ENCODE measurements at regions of chr18 and their contacts with region 1.

Region 1: DNA sequence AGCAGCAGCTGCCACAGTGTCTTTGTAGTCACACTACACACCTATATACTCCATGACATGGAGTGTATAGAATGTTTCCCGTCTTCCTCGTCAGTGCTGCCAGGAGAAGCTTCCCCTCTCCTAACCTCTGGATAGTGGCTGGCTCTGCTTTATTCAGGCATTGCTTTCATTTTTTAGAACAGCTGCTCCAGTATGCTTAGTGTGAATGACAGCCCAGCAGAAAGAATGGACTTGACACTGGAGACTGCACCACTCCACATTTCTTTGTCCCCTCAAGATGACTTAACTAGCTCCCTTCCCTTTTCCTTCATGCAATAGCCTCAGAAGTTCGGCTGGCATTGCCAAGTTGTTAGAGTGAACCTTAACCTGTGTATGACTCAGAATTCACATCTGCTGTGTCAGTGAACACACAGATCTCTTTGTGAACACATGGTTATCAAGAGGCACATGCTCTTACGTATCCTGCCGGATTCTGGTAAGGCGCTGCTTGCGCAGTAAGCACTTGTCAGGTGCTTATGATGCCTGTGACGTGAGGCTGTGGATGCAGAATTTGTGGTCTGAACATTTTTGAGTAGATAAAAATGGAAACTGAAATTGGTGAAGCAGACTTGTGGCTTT is 73.9 kb downstream of the NEDD4L start:
- DNase-seq: peak; percentile 63
- H3K4me3 ChIP-seq: no peak overlapping the region
- H3K27ac ChIP-seq: peak overlapping the region; percentile 62 to 73 (median 70)
- H3K4me1 ChIP-seq: peaks cover 7 to 19% (median 13%) of the 10 kb centered on the region in 4 donors
- H3K27me3 ChIP-seq: no peaks in the 10 kb centered on the region
- CTCF ChIP-seq: no peak
- EP300 ChIP-seq: no peak
- POLR2A ChIP-seq: no peak

Region 2: GRCh38 chr18:57569133-57569532 is 548.8 kb before region 1 on chr18:
- in situ Hi-C with region 1: no loop called
- intact Hi-C with region 1: no loop called
- DNase-seq: no peak
- H3K4me3 ChIP-seq: no peak overlapping the region
- H3K27ac ChIP-seq: no peak overlapping the region
- H3K4me1 ChIP-seq: no peaks in the 10 kb centered on the region
- H3K27me3 ChIP-seq: no peaks in the 10 kb centered on the region
- CTCF ChIP-seq: no peak
- EP300 ChIP-seq: no peak
- POLR2A ChIP-seq: no peak

Region 3: GRCh38 chr18:57881818-57882413 is 236.0 kb before region 1 on chr18:
- in situ Hi-C with region 1: loop called (anchors 10 to 25 kb)
- intact Hi-C with region 1: loop called (anchors 10 kb)
- DNase-seq: peak; percentile 74
- H3K4me3 ChIP-seq: no peak overlapping the region
- H3K27ac ChIP-seq: no peak overlapping the region
- H3K4me1 ChIP-seq: peaks cover 0 to 3% (median 0%) of the 10 kb centered on the region in 4 donors
- H3K27me3 ChIP-seq: no peaks in the 10 kb centered on the region
- CTCF ChIP-seq: peak; percentile 85 to 91 (median 90)
- EP300 ChIP-seq: no peak
- POLR2A ChIP-seq: no peak

Region 4: GRCh38 chr18:57959278-57959677 is 158.6 kb before region 1 on chr18:
- in situ Hi-C with region 1: loop called in 1 of 4 experiments (anchors 25 kb)
- intact Hi-C with region 1: no loop called
- DNase-seq: peak; percentile 53
- H3K4me3 ChIP-seq: no peak overlapping the region
- H3K27ac ChIP-seq: no peak overlapping the region
- H3K4me1 ChIP-seq: peaks cover 0 to 16% (median 8%) of the 10 kb centered on the region in 4 donors
- H3K27me3 ChIP-seq: no peaks in the 10 kb centered on the region
- CTCF ChIP-seq: peak; percentile 24 to 45 (median 33)
- EP300 ChIP-seq: no peak
- POLR2A ChIP-seq: no peak

Region 5: GRCh38 chr18:58051765-58052460 is 66.0 kb before region 1 on chr18:
- in situ Hi-C with region 1: loop called in 2 of 4 experiments (anchors 5 to 10 kb)
- intact Hi-C with region 1: no loop called
- DNase-seq: no peak
- H3K4me3 ChIP-seq: no peak overlapping the region
- H3K27ac ChIP-seq: no peak overlapping the region
- H3K4me1 ChIP-seq: peaks cover 0 to 4% (median under 1%) of the 10 kb centered on the region in 4 donors
- H3K27me3 ChIP-seq: no peaks in the 10 kb centered on the region
- CTCF ChIP-seq: peak in 4 of 5 experiments; percentile 25 to 37 (median 36)
- EP300 ChIP-seq: no peak
- POLR2A ChIP-seq: no peak

Region 6: DNA sequence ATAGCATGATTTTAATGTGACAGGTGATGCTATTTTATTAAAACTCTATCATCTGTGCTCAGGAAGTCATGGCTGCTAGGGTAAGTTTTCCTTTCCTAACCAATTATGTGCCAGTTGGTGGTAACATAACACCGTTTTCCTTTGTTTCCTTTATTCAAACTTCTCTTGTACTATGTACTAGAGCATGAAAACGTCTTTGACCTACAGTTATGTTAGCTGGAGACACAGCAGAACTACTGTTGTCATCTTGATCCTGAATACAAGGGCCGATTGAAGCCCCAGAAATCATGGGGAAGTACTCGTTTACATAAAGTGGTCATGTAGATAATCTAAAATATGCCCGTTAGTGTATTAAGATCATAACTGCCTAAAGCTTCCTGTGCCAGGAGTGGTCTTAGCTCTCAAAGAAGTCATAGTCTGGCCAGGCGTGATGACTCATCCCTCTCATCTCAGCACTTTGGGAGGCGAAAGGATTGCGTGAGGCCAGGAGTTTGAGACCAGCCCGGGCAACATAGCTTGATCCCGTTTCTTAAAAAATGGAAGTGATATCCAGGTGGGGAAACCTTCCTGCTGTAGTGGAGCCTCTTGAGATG is 53.4 kb before region 1 on chr18:
- in situ Hi-C with region 1: loop called in 2 of 4 experiments (anchors 10 kb)
- intact Hi-C with region 1: no loop called
- DNase-seq: no peak
- H3K4me3 ChIP-seq: no peak overlapping the region
- H3K27ac ChIP-seq: no peak overlapping the region
- H3K4me1 ChIP-seq: no peaks in the 10 kb centered on the region
- H3K27me3 ChIP-seq: no peaks in the 10 kb centered on the region
- CTCF ChIP-seq: no peak
- EP300 ChIP-seq: no peak
- POLR2A ChIP-seq: no peak

Measured in transverse colon (tissue), 4 donors.